Activated CD4-positive, alpha-beta T cell treated with anti-CD3 and anti-CD28 coated beads for 36 hours (primary cell): ENCODE measurements at regions of chr2 and their contacts with region 1.

Region 1: GRCh38 chr2:178891265-178891958 is 84.2 kb upstream of the TTN start:
- DNase-seq: peak; percentile 79
- ATAC-seq: peak; percentile 90
- H3K4me3 Mint-ChIP-seq: no peak overlapping the region
- H3K27ac Mint-ChIP-seq: no peak overlapping the region
- H3K4me1 Mint-ChIP-seq: peaks cover 9% of the 10 kb centered on the region
- H3K27me3 Mint-ChIP-seq: no peaks in the 10 kb centered on the region

Region 2: DNA sequence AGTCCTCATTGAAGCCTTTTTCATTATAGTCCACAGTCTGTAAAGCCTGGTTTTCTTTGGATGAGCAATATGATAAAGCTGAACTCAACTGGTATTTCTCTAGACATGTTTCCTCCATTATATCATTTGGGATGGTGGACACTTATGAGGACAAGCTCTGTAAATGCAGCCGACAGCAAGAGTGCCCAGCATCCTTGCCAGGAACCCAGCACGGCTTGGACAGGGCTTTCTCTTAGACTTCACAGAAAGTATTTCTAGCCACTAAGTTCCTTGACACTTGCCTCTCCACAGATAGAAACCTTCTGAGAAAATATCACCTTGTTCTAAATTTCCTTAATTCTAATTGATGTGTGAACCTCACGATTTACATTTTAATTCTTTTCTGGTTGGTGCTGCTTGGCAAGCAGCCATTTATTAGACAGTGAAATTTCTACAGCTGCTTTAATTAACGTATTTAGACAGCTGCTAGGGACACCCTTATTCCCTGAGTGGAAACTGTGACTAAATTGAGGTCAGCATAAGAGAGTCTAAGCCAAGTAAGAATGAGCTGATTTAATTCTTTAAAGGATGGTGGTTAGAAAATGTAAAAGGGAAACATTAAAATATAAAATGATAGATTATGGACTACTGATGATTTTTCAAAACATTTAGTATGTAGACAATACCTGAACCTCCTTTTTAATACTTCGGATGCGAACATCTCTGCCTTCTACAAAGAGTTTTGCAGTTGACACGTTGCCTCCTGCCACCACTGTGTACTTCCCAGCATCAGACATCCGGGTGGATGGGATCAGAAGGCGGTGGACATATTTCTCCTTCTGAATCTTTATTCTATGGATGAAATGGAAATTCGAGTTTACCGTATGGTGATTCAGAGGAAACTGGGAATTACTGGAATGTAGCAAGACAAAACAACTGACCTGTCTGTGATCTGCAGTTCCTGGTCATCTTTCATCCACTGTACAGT is 124.0 kb before region 1 on chr2:
- CTCF ChIA-PET with region 1: no interaction called
- POLR2A ChIA-PET with region 1: no interaction called
- intact Hi-C with region 1: no loop called
- DNase-seq: no peak
- ATAC-seq: no peak
- H3K4me3 Mint-ChIP-seq: no peak overlapping the region
- H3K27ac Mint-ChIP-seq: no peak overlapping the region
- H3K4me1 Mint-ChIP-seq: no peaks in the 10 kb centered on the region
- H3K27me3 Mint-ChIP-seq: no peaks in the 10 kb centered on the region

Region 3: GRCh38 chr2:178874529-178875240 is 16.7 kb before region 1 on chr2:
- CTCF ChIA-PET with region 1: interaction called, 18 read pairs
- POLR2A ChIA-PET with region 1: no interaction called
- intact Hi-C with region 1: no loop called
- DNase-seq: no peak
- ATAC-seq: no peak
- H3K4me3 Mint-ChIP-seq: no peak overlapping the region
- H3K27ac Mint-ChIP-seq: no peak overlapping the region
- H3K4me1 Mint-ChIP-seq: peaks cover 12% of the 10 kb centered on the region
- H3K27me3 Mint-ChIP-seq: no peaks in the 10 kb centered on the region